BJ (cell line): ENCODE measurements at regions of chr12 and their contacts with region 1.

Region 1: DNA sequence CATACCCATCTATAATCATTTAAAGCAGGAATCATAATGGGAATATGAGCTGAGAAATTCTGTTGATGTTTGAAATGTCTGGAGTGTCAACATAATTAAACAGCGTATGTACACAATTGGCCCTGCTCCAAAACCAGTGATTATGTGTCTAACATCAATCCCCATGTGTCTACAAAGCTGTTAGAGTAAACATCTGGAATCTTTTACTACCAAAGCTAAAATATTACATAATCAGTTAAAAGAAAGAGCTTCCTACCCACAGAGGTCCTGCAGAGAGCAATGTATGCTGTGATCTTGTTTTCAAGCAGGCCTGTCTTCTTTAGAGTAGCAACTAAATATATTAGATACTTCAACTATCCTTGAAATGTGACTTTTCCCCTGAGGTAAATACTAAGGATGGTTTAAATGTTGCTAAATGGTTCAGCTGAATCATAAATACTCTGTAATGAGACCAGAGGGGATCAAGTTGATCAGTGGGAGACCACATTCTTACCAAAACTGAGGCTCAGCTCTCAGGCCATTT is 74.3 kb downstream of the RASSF8 start:
- DNase-seq: peak; percentile 34
- H3K4me3 ChIP-seq: no peak overlapping the region
- H3K27me3 ChIP-seq: no peaks in the 10 kb centered on the region
- CTCF ChIP-seq: no peak

Region 2: GRCh38 chr12:25677232-25677937 is 355.4 kb before region 1 on chr12:
- CTCF ChIA-PET with region 1: interaction called, 12 read pairs
- POLR2A ChIA-PET with region 1: no interaction called
- DNase-seq: no peak
- H3K4me3 ChIP-seq: no peak overlapping the region
- H3K27me3 ChIP-seq: no peaks in the 10 kb centered on the region
- CTCF ChIP-seq: peak; percentile 34; the same call in 1 of the 2 replicates

Region 3: DNA sequence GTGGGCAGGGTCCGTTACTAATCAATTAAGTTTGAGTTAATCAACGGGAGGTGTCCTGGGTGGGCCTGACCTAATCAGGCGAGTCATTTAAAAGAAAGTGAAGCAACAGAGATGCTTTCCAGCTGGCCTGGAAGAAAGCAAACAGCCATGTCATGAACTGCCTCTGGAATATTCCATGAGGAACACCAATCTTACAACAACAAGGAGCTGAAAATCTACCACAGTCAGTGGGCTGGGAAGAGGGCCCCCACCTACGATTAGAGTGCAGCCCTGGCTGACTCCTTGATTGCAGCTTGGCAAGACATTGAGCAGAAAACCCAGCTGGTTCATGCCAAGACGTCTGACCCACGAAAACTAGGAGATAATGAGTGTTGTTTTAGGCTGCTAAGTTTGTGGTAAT is 218.8 kb after region 1 on chr12:
- CTCF ChIA-PET with region 1: no interaction called
- POLR2A ChIA-PET with region 1: no interaction called
- DNase-seq: no peak
- H3K4me3 ChIP-seq: no peak overlapping the region
- H3K27me3 ChIP-seq: no peaks in the 10 kb centered on the region
- CTCF ChIP-seq: no peak